Pancreas (tissue), 10 donors: ENCODE measurements at regions of chr20 and their contacts with region 1.

Region 1: DNA sequence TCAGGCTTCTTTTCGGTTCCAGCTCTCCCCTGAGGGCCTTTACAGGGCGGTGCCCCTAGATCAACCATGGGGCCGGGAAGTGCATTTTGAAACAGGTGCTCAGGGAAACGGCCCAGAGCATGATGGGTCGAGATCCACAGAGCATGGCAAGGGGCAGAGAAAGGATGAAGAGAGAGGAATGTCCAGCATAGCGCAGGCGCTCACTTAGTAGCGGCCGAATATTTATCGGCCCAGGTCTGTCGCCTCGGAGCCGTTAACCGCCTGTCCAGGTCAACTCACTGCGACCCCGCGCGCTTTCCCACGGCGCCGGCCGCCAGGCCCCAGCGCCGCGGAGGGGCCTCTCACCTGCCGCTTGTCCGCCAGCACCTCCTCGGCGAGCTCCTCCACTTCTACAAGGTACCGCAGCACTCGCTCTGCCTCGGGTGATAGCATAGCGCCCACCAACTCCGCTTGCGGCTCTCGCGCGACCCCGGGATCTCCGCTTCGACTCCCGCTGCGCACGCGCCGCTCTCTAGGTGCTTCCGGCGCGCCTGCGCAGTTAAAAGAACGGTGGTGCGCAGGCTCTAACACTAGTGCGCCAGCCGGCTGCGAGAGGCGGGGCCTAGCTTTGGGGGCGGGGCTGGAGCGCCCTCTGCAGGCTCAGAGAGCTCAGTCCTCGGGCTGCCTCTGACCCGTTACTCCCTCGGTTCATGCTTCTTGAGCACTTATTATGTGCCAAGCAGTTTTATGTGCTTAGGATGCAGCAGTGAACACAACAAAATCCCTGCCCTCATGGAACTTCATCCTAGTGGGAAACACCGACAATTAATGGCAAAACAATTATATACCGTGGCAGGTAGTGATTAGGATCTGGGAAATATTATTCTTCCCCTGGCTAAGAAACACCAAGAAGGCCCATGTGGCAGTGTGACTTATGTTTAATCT is at the start of gene PDRG1:
- DNase-seq: peak; percentile 90 to 99 (median 98)
- ATAC-seq: peak; percentile 99 to 100 (median 100)
- H3K4me3 ChIP-seq: peak within 1 kb of the TSS; percentile 90 to 97 (median 93)
- H3K27ac ChIP-seq: peak within 1 kb of the TSS; percentile 40 to 62 (median 50)
- H3K4me1 ChIP-seq: peaks cover 0 to 11% (median 5%) of the 10 kb centered on the region in 3 donors
- H3K27me3 ChIP-seq: no peaks in the 10 kb centered on the region
- CTCF ChIP-seq: peak; percentile 86 to 90 (median 86)
- total RNA-seq, gene PDRG1: 3.6 to 6.9 (median 5.2) TPM

Region 2: GRCh38 chr20:31842471-31843157 is 109.2 kb before region 1 on chr20:
- intact Hi-C with region 1: loop called in 1 of 3 experiments (anchors 5 kb)
- DNase-seq: peak in 1 of 6 donors; percentile 53
- ATAC-seq: peak in 1 of 4 donors; percentile 29
- H3K4me3 ChIP-seq: no peak overlapping the region
- H3K27ac ChIP-seq: no peak overlapping the region
- H3K4me1 ChIP-seq: no peaks in the 10 kb centered on the region
- H3K27me3 ChIP-seq: no peaks in the 10 kb centered on the region
- CTCF ChIP-seq: no peak

Region 3: GRCh38 chr20:31851240-31851955 is 100.4 kb before region 1 on chr20:
- intact Hi-C with region 1: loop called in 2 of 3 experiments (anchors 5 kb)
- DNase-seq: peak in 1 of 6 donors; percentile 11
- ATAC-seq: no peak
- H3K4me3 ChIP-seq: no peak overlapping the region
- H3K27ac ChIP-seq: no peak overlapping the region
- H3K4me1 ChIP-seq: no peaks in the 10 kb centered on the region
- H3K27me3 ChIP-seq: no peaks in the 10 kb centered on the region
- CTCF ChIP-seq: no peak

Region 4: DNA sequence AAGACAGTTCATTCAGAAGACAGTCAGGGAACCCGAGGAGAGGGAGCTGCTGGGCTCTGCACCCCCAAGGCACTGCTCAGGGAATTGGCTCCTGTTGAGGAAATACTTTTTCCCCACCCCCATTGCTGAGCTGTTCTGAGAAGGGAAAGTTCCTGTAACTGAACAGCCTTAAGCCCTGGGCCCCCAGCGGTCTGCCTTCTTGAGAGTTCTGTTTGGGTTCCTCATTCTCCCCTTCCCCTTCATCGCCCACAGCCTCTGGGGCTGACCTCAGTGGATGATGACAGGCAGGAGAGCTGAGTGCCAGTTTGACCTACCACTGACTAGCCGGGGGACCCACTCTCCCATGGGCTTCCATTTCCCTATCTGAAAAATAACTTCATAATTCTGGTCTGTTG is 111.0 kb after region 1 on chr20:
- intact Hi-C with region 1: no loop called
- DNase-seq: peak in 1 of 6 donors; percentile 60
- ATAC-seq: peak in 2 of 4 donors; percentile 80 to 84
- H3K4me3 ChIP-seq: no peak overlapping the region
- H3K27ac ChIP-seq: peak overlapping the region in 1 of 4 donors; percentile 18
- H3K4me1 ChIP-seq: no peaks in the 10 kb centered on the region
- H3K27me3 ChIP-seq: no peaks in the 10 kb centered on the region
- CTCF ChIP-seq: no peak